ENCODE measurements at regions of chr16 and their contacts with region 1.

Region 1: GRCh38 chr16:69941251-69942098 is 9.7 kb upstream of the CLEC18A start:
- DNase-seq: no peak
- ATAC-seq: no peak
- H3K4me3 ChIP-seq: no peak overlapping the region
- H3K27ac ChIP-seq: no peak overlapping the region
- H3K4me1 ChIP-seq: no peaks in the 10 kb centered on the region
- H3K27me3 ChIP-seq: no peaks in the 10 kb centered on the region
- CTCF ChIP-seq: no peak
- EP300 ChIP-seq: no peak
- POLR2A ChIP-seq: no peak
- RAD21 ChIP-seq: no peak

Region 2: DNA sequence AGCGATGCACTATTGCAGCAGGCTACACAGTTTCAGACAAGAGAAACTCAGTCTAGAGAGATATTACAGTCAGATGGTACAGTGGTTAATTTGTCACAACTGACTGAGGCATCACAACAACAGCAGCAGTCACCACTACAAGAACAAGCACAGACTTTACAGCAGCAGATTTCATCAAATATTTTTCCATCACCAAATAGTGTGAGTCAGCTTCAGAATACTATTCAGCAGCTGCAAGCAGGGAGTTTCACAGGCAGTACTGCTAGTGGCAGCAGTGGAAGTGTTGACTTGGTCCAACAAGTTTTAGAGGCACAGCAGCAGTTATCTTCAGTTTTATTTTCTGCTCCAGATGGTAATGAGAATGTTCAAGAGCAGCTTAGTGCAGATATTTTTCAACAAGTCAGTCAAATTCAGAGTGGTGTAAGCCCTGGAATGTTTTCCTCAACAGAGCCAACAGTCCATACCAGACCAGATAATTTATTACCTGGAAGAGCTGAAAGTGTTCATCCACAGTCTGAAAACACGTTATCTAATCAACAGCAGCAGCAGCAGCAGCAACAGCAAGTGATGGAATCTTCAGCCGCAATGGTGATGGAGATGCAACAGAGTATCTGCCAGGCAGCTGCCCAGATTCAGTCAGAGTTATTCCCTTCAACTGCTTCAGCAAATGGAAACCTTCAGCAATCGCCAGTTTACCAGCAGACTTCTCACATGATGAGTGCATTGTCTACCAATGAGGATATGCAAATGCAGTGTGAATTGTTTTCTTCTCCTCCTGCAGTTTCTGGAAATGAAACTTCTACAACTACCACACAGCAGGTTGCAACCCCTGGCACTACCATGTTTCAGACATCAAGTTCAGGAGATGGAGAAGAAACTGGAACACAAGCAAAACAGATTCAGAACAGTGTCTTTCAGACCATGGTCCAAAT is 249.2 kb before region 1 on chr16:
- CTCF ChIA-PET with region 1: no interaction called
- POLR2A ChIA-PET with region 1: no interaction called
- in situ Hi-C with region 1: no loop called
- intact Hi-C with region 1: no loop called
- DNase-seq: no peak
- ATAC-seq: no peak
- H3K4me3 ChIP-seq: no peak overlapping the region
- H3K27ac ChIP-seq: no peak overlapping the region
- H3K4me1 ChIP-seq: no peaks in the 10 kb centered on the region
- H3K27me3 ChIP-seq: no peaks in the 10 kb centered on the region
- CTCF ChIP-seq: no peak
- EP300 ChIP-seq: no peak
- POLR2A ChIP-seq: no peak
- RAD21 ChIP-seq: no peak

Region 3: DNA sequence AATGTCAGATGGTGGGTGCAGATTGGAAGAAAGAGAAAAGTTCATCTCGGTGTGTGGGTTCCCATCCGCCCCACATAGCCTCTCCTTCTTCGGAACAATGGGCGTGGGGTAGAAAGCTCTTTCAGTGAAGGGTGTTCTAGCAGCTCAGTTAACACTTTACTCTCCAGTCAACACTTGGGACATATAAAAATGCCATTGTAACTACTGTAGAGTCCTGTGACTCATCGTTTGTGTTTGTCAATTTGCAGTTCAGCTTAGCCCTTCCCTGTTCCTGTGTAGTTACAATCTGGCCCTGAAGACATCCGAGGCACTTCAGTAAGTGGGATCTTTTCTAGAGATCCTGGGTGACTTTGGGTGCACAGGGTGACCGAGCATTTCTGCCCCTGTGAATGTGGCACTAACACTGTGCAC is 220.6 kb after region 1 on chr16:
- CTCF ChIA-PET with region 1: no interaction called
- POLR2A ChIA-PET with region 1: no interaction called
- in situ Hi-C with region 1: loop called (anchors 10 kb)
- intact Hi-C with region 1: no loop called
- DNase-seq: peak in 3 of 4 experiments; percentile 17 to 23 (median 17)
- ATAC-seq: no peak; the same call in 1 of the 3 replicates
- H3K4me3 ChIP-seq: no peak overlapping the region
- H3K27ac ChIP-seq: no peak overlapping the region
- H3K4me1 ChIP-seq: peaks cover 0 to 4% of the 10 kb centered on the region in 2 experiments; a peak in 1 of 5 replicates
- H3K27me3 ChIP-seq: no peaks in the 10 kb centered on the region; a peak in 1 of 5 replicates
- CTCF ChIP-seq: no peak
- EP300 ChIP-seq: no peak
- POLR2A ChIP-seq: no peak
- RAD21 ChIP-seq: no peak

Measured in K562 (cell line).